Posterior vena cava (tissue), 2 donors: ENCODE measurements at regions of chr11 and their contacts with region 1.

Region 1: DNA sequence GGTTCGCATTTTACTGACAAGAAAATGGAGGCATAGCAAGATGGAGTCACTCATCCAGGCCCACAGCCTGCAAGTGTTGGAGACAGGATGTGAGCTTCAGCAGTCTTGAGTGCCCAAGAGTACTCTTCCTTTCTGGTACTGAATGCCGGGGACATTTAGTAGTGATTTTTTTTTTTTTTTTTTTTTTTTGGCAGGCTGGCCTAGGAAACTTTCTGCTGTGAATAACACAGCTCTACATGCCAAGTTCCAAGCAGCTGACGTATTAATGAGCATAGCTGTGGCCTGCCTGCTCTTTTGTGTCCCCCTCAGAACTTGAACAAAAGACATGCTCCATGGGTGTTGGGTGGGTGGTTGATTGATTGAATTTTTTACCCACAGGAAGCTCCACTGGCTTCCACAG is 195.5 kb upstream of the CADM1 start:
- DNase-seq: no peak

Region 2: GRCh38 chr11:115606498-115607220 is 93.1 kb before region 1 on chr11:
- intact Hi-C with region 1: loop called in 1 of 2 experiments (anchors 10 kb)
- DNase-seq: no peak